Heart left ventricle (tissue), 16 donors: ENCODE measurements at regions of chr15 and their contacts with region 1.

Region 1: DNA sequence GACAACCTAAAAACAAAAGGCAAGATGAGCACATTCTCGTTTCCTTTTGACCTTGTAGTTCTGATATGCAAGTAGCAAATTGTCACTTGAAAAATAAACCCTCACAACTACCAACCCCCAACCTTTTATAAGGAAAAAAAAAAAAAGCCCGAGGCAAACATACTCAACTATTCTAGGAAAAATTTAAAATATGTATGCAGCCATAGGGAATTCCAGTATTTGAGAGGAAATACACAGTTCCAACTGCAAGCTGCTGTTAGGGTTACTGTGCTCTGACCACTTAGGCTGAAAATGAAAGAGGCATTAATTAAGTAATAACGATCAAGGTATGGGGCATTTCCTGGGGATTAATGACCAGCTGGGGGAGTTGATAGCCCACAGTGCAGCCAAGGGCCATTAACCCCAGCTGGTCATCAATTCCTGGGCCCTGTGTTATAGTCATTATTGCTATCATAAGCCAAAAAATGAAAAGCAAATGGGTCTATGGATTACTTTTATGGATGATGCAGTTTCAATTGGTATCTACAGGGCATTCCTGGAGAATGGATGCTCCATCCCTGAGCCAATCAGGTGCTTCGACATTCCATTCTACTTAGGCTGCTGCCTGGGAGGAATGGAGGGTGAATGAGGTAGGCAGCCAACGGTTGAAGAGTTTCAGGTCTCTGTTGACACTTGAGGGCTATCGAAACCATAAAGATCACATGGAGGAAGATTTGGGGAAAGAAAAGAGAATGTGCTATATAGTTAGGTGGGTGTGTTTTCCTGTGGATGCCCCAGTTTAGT is 282.1 kb upstream of the DPH6 start:
- DNase-seq: no peak
- ATAC-seq: no peak
- H3K4me3 ChIP-seq: no peak overlapping the region
- H3K27ac ChIP-seq: no peak overlapping the region
- H3K4me1 ChIP-seq: peaks cover 0 to 11% (median 3%) of the 10 kb centered on the region in 12 donors
- H3K27me3 ChIP-seq: no peaks in the 10 kb centered on the region
- CTCF ChIP-seq: no peak
- POLR2A ChIP-seq: no peak

Region 2: GRCh38 chr15:35784745-35785144 is 43.4 kb before region 1 on chr15:
- intact Hi-C with region 1: loop called in 1 of 10 experiments (anchors 2 kb)
- DNase-seq: no peak
- ATAC-seq: no peak
- H3K4me3 ChIP-seq: no peak overlapping the region
- H3K27ac ChIP-seq: no peak overlapping the region
- H3K4me1 ChIP-seq: no peaks in the 10 kb centered on the region
- H3K27me3 ChIP-seq: no peaks in the 10 kb centered on the region
- CTCF ChIP-seq: no peak
- POLR2A ChIP-seq: no peak

Region 3: DNA sequence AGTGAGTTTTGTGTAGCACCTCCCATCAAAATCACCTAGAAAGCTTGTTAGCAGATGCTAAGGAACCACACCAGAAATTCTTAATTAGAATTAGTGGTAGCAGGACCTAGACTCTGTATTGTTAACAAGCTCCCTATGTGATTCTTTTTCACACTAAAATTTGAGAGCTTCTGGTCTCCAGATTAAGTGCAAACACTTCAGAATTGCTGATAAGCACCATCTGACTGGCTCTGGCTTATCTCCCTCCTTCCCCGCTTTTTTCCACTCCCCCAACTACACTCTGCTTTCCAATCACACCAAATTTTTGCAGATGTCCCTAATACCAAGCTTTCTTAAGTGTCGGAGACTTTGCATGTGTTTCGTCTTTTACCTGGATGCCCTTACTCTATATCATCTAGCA is 128.0 kb after region 1 on chr15:
- intact Hi-C with region 1: no loop called
- DNase-seq: no peak
- ATAC-seq: no peak
- H3K4me3 ChIP-seq: no peak overlapping the region
- H3K27ac ChIP-seq: no peak overlapping the region
- H3K4me1 ChIP-seq: no peaks in the 10 kb centered on the region
- H3K27me3 ChIP-seq: no peaks in the 10 kb centered on the region
- CTCF ChIP-seq: no peak
- POLR2A ChIP-seq: no peak